CD8-positive, alpha-beta T cell (primary cell): ENCODE measurements at regions of chr2 and their contacts with region 1.

Region 1: DNA sequence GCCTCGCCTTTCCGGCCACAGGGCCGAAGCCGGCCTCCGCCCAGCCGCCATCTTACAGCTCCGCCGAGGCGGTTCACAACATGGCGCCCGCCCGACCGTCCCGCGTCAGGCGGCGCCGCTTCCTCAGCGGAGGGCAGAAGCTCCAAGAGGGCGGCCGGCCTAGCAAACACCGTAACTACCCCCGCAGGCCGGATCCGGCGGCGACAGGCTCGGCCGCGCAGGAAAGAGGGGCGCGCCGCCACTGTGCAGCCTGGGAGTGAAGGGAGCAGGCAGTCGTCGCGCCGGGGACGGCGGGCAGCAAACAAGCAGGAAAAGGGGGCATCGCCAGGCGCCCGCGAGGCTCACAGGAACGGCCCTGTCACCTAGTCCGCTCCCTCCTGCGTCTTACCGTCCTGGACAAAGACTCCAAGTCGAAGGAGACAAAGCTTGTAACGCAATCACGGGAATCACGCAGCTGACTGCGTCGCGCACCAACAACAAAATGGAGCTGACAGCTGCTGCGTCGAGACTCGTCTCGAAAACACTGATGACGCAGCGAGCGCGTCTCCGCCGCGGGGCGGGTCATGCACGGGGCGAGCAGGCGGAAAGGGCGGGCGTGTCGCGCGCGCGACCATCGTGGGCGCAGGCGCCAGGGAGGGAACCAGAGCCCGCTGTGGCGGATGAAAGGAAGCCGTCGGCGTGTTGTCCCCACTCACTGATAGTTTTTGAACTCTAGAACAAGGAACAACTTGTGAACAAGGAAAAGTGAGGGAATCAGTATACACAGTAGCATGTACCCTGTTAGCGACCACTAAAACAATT is at the start of gene CLK1:
- DNase-seq: peak; percentile 94 to 99 (median 98)
- ATAC-seq: peak; percentile 78
- H3K4me3 ChIP-seq: peak within 1 kb of the TSS; percentile 84 to 98
- H3K4me3 Mint-ChIP-seq: peak within 1 kb of the TSS; percentile 96
- H3K27ac ChIP-seq: peak within 1 kb of the TSS; percentile 98 to 100
- H3K27ac Mint-ChIP-seq: peak within 1 kb of the TSS; percentile 100
- H3K4me1 ChIP-seq: peaks cover 29% of the 10 kb centered on the region
- H3K4me1 Mint-ChIP-seq: peaks cover 43% of the 10 kb centered on the region
- H3K27me3 ChIP-seq: no peaks in the 10 kb centered on the region
- H3K27me3 Mint-ChIP-seq: no peaks in the 10 kb centered on the region
- CTCF ChIP-seq: no peak
- total RNA-seq, gene CLK1: 1,353 to 1,404 TPM

Region 2: DNA sequence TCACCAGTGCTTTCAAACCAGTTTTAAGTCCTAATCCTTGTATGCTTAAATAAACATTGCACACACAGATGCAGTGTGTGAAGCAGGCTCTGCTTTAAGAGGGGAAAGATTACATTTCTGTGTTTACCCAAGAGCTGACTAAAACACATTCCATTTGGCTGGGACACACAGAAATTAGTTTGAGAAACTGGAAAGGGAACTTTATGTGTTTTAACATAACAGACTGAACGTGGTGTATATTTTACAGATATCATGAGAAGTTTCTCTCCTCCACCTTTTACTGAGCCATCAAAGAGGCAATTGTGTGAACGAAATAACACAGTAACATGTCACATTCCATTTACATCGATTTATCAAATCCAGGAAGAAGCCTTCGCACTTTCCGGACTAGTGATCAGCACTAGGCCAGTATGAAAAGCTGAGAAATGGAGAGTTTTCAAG is 787.1 kb before region 1 on chr2:
- CTCF ChIA-PET with region 1: no interaction called
- POLR2A ChIA-PET with region 1: no interaction called
- intact Hi-C with region 1: no loop called
- DNase-seq: no peak
- ATAC-seq: no peak
- H3K4me3 ChIP-seq: no peak overlapping the region
- H3K4me3 Mint-ChIP-seq: no peak overlapping the region
- H3K27ac ChIP-seq: no peak overlapping the region
- H3K27ac Mint-ChIP-seq: no peak overlapping the region
- H3K4me1 ChIP-seq: no peaks in the 10 kb centered on the region
- H3K4me1 Mint-ChIP-seq: no peaks in the 10 kb centered on the region
- H3K27me3 ChIP-seq: no peaks in the 10 kb centered on the region
- H3K27me3 Mint-ChIP-seq: peaks cover 2% of the 10 kb centered on the region
- CTCF ChIP-seq: no peak

Region 3: GRCh38 chr2:200850512-200851256 is 13.7 kb before region 1 on chr2:
- CTCF ChIA-PET with region 1: interaction called, 3 read pairs
- POLR2A ChIA-PET with region 1: interaction called, 38 read pairs
- intact Hi-C with region 1: loop called in 1 of 2 experiments (anchors 1 kb)
- DNase-seq: peak in 1 of 9 experiments; percentile 50
- ATAC-seq: no peak
- H3K4me3 ChIP-seq: no peak overlapping the region
- H3K4me3 Mint-ChIP-seq: no peak overlapping the region
- H3K27ac ChIP-seq: no peak overlapping the region
- H3K27ac Mint-ChIP-seq: no peak overlapping the region
- H3K4me1 ChIP-seq: no peaks in the 10 kb centered on the region
- H3K4me1 Mint-ChIP-seq: peaks cover 4% of the 10 kb centered on the region
- H3K27me3 ChIP-seq: no peaks in the 10 kb centered on the region
- H3K27me3 Mint-ChIP-seq: no peaks in the 10 kb centered on the region
- CTCF ChIP-seq: no peak

Region 4: GRCh38 chr2:200901459-200902072 is 37.2 kb after region 1 on chr2:
- CTCF ChIA-PET with region 1: interaction called, 3 read pairs
- POLR2A ChIA-PET with region 1: interaction called, 7 read pairs
- intact Hi-C with region 1: loop called in 1 of 2 experiments (anchors 5 kb)
- DNase-seq: peak; percentile 36 to 92 (median 73)
- ATAC-seq: peak; percentile 100
- H3K4me3 ChIP-seq: no peak overlapping the region
- H3K4me3 Mint-ChIP-seq: no peak overlapping the region
- H3K27ac ChIP-seq: peak overlapping the region in 1 of 2 experiments; percentile 4
- H3K27ac Mint-ChIP-seq: peak overlapping the region; percentile 45
- H3K4me1 ChIP-seq: peaks cover 4% of the 10 kb centered on the region
- H3K4me1 Mint-ChIP-seq: peaks cover 7% of the 10 kb centered on the region
- H3K27me3 ChIP-seq: no peaks in the 10 kb centered on the region
- H3K27me3 Mint-ChIP-seq: no peaks in the 10 kb centered on the region
- CTCF ChIP-seq: peak; percentile 84

Region 5: GRCh38 chr2:201257956-201258665 is 393.7 kb after region 1 on chr2:
- CTCF ChIA-PET with region 1: no interaction called
- POLR2A ChIA-PET with region 1: interaction called, 5 read pairs
- intact Hi-C with region 1: loop called in 1 of 2 experiments (anchors 2 kb)
- DNase-seq: peak; percentile 87 to 99 (median 94)
- ATAC-seq: peak; percentile 69
- H3K4me3 ChIP-seq: peak overlapping the region; percentile 45 to 48
- H3K4me3 Mint-ChIP-seq: peak overlapping the region; percentile 89
- H3K27ac ChIP-seq: peak overlapping the region; percentile 85 to 93
- H3K27ac Mint-ChIP-seq: peak overlapping the region; percentile 97
- H3K4me1 ChIP-seq: peaks cover 68% of the 10 kb centered on the region
- H3K4me1 Mint-ChIP-seq: peaks cover 75% of the 10 kb centered on the region
- H3K27me3 ChIP-seq: no peaks in the 10 kb centered on the region
- H3K27me3 Mint-ChIP-seq: no peaks in the 10 kb centered on the region
- CTCF ChIP-seq: no peak

Region 6: DNA sequence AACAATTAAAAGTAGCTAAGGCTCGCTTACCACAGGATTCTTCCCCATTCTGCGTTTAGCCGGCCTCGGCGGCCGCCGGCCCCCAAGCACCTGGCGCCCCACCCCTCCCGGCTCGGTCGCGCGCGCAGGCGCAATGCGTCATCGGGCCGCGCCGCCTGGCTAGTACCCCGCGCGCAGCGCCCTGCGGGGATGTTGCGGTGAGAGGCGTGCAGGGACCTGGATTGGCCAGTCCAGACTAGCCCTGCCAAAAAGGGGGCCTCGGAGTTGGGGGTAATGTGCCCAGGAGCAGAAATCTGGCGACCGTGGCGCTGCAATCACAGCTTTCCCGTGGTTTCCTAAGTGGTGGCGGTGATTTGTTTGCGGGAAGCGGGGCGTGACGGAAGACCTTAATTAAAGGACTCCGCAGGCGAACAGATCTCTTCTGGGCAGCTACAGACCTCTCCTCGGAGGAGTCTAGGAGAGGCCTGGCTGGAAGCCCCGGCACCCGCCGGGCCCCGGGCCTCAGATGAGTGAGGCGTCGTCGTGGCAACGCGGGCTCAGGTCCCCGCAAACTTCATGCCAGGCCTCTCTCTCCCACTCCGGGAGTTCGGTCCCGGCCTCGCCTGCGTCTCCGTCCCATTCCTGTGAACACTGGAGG is 778.3 kb after region 1 on chr2:
- CTCF ChIA-PET with region 1: no interaction called
- POLR2A ChIA-PET with region 1: interaction called, 3 read pairs
- intact Hi-C with region 1: loop called in 1 of 2 experiments (anchors 10 kb)
- DNase-seq: peak; percentile 65 to 91 (median 83)
- ATAC-seq: peak; percentile 86
- H3K4me3 ChIP-seq: peak overlapping the region; percentile 98 to 99
- H3K4me3 Mint-ChIP-seq: peak overlapping the region; percentile 90
- H3K27ac ChIP-seq: peak overlapping the region; percentile 89 to 99
- H3K27ac Mint-ChIP-seq: peak overlapping the region; percentile 96
- H3K4me1 ChIP-seq: no peaks in the 10 kb centered on the region
- H3K4me1 Mint-ChIP-seq: peaks cover 14% of the 10 kb centered on the region
- H3K27me3 ChIP-seq: no peaks in the 10 kb centered on the region
- H3K27me3 Mint-ChIP-seq: no peaks in the 10 kb centered on the region
- CTCF ChIP-seq: no peak